Activated CD4-positive, alpha-beta T cell treated with anti-CD3 and anti-CD28 coated beads, Interleukin-2, amount 10 ng/mL, durations not matched to agents 24 days and 14 days (primary cell): ENCODE measurements at regions of chr4 and their contacts with region 1.

Region 1: GRCh38 chr4:139950568-139950967 is 203.4 kb downstream of the MAML3 start:
- DNase-seq: peak; percentile 87
- H3K4me3 Mint-ChIP-seq: peak overlapping the region; percentile 59
- H3K27ac Mint-ChIP-seq: peak overlapping the region; percentile 88
- H3K4me1 Mint-ChIP-seq: peaks cover 35% of the 10 kb centered on the region
- H3K27me3 Mint-ChIP-seq: peaks cover 4% of the 10 kb centered on the region

Region 2: DNA sequence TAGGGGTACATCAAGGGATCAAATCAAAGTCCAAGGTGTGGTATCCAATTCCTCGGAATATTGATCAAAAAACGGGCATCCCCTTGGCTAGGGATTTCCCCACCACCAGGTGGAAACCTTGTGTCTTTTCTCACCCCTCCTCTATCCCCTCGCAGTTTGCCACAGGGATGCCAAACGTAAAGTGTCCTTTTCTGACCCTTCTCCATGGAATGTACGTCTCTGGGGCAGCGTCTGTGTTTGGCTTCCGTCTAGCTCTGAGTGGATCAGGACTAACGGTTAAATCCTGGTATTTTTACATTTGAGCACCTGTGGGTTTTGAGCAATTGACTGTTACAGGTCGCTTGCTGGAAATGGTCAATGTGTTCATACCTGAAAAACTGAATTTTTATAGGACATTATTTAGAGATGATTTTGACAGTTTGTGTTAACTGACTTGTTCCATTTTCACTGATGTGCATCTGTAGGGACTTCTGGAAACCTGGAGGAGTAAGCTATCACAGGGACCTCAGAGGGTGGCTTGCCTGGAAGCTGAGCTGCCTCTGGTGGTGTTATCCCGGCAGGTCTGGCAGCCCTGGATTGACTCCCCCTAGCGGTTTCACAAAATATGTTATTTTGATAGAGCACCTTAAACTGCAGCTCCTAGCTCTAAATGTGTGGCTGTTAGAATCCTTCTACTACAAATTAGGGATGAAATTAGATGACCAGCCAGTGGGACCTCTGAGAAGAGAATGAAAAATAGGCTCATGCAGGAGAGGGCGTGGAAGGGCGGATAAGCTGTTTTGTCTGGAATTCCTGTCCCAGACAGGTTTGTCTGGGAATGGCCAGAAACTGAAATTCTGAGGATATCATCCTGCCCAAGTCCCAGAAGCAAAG is 293.7 kb before region 1 on chr4:
- intact Hi-C with region 1: loop called (anchors 2 kb)
- DNase-seq: peak; percentile 84
- H3K4me3 Mint-ChIP-seq: peak overlapping the region; percentile 75
- H3K27ac Mint-ChIP-seq: peak overlapping the region; percentile 98
- H3K4me1 Mint-ChIP-seq: peaks cover 32% of the 10 kb centered on the region
- H3K27me3 Mint-ChIP-seq: peaks cover 5% of the 10 kb centered on the region

Region 3: DNA sequence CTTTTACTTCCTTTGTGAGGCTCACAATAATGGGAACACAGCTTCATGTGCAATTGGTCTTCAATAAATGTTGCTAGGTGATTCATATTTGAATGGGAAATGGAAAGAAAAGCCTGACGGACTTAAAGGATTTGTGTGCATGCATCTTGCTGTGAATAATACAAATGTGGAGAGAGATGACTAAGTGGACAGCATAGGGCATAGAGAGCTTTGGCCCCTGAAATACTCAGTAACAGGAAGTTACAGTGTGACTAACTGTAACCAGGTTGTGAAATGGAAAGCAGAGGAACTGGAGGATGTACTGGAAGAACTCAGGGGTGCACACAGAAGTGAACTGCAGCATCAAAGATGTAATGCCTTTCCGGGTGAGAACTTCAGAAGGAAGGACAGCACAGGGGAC is 78.3 kb before region 1 on chr4:
- intact Hi-C with region 1: loop called (anchors 2 kb)
- DNase-seq: no peak
- H3K4me3 Mint-ChIP-seq: no peak overlapping the region
- H3K27ac Mint-ChIP-seq: peak overlapping the region; percentile 17
- H3K4me1 Mint-ChIP-seq: peaks cover 8% of the 10 kb centered on the region
- H3K27me3 Mint-ChIP-seq: peaks cover 8% of the 10 kb centered on the region

Region 4: DNA sequence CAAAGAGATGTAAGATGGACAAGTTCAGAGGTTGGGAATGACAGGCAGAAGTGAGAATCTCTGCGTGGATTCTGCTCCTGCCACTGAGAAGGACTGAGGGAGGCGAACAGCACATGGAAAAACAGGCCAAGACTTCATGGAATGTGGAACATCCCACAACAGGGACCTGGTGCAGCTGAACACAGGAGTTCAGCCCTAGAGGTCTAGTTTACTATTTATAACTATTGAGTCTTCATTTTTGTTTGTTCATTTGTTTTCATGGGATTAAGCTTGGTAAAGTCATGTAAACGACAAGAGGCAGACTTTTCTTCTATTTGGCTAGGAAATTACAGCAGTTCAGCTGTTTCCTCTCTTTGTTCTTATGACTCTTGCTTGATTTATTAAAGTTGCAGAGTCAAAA is 31.0 kb before region 1 on chr4:
- intact Hi-C with region 1: no loop called
- DNase-seq: no peak
- H3K4me3 Mint-ChIP-seq: no peak overlapping the region
- H3K27ac Mint-ChIP-seq: no peak overlapping the region
- H3K4me1 Mint-ChIP-seq: no peaks in the 10 kb centered on the region
- H3K27me3 Mint-ChIP-seq: peaks cover 33% of the 10 kb centered on the region

Region 5: DNA sequence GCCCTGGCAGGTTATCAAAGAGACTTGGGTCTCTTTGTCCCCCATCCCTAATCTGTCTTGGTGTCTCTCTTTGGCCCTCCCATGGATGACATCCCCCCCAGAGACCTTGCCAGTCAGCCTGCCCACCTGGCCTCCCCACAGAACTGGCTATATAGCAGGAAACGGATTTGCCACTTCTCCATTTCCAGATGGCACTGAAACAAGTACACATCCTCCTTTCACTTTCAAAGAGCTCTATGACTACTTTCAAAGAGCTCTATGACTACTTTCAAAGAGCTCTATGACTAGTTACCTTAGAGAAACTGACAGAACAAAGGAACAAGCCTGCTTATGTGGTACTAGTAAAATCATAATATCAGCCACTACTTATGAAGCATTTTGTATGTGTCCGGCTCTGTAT is 28.1 kb after region 1 on chr4:
- intact Hi-C with region 1: loop called (anchors 1 kb)
- DNase-seq: peak; percentile 69
- H3K4me3 Mint-ChIP-seq: peak overlapping the region; percentile 40
- H3K27ac Mint-ChIP-seq: peak overlapping the region; percentile 86
- H3K4me1 Mint-ChIP-seq: peaks cover 35% of the 10 kb centered on the region
- H3K27me3 Mint-ChIP-seq: peaks cover 4% of the 10 kb centered on the region

Region 6: GRCh38 chr4:140071806-140072205 is 121.2 kb after region 1 on chr4:
- intact Hi-C with region 1: loop called (anchors 1 kb)
- DNase-seq: peak; percentile 89
- H3K4me3 Mint-ChIP-seq: peak overlapping the region; percentile 73
- H3K27ac Mint-ChIP-seq: peak overlapping the region; percentile 83
- H3K4me1 Mint-ChIP-seq: peaks cover 44% of the 10 kb centered on the region
- H3K27me3 Mint-ChIP-seq: peaks cover 41% of the 10 kb centered on the region

Region 7: GRCh38 chr4:140103676-140104075 is 153.1 kb after region 1 on chr4:
- intact Hi-C with region 1: loop called (anchors 1 kb)
- DNase-seq: peak; percentile 83
- H3K4me3 Mint-ChIP-seq: peak overlapping the region; percentile 37
- H3K27ac Mint-ChIP-seq: peak overlapping the region; percentile 79
- H3K4me1 Mint-ChIP-seq: peaks cover 51% of the 10 kb centered on the region
- H3K27me3 Mint-ChIP-seq: peaks cover 17% of the 10 kb centered on the region